Gastrocnemius medialis (tissue), 4 donors: ENCODE measurements at regions of chr2 and their contacts with region 1.

Region 1: GRCh38 chr2:167187978-167188967 is 300.0 kb downstream of the XIRP2 start:
- DNase-seq: no peak
- ATAC-seq: peak; percentile 51 to 57
- H3K4me3 ChIP-seq: peak overlapping the region; percentile 34 to 57 (median 43)
- H3K27ac ChIP-seq: peak overlapping the region; percentile 81 to 88 (median 86)
- H3K4me1 ChIP-seq: peaks cover 31 to 33% of the 10 kb centered on the region in 2 donors
- H3K27me3 ChIP-seq: no peaks in the 10 kb centered on the region
- CTCF ChIP-seq: no peak
- POLR2A ChIP-seq: peak in 1 of 2 donors; percentile 8

Region 2: GRCh38 chr2:166332106-166332505 is 856.2 kb before region 1 on chr2:
- in situ Hi-C with region 1: no loop called
- intact Hi-C with region 1: no loop called
- DNase-seq: no peak
- ATAC-seq: no peak
- H3K4me3 ChIP-seq: no peak overlapping the region
- H3K27ac ChIP-seq: no peak overlapping the region
- H3K4me1 ChIP-seq: no peaks in the 10 kb centered on the region
- H3K27me3 ChIP-seq: no peaks in the 10 kb centered on the region
- CTCF ChIP-seq: no peak
- POLR2A ChIP-seq: no peak

Region 3: DNA sequence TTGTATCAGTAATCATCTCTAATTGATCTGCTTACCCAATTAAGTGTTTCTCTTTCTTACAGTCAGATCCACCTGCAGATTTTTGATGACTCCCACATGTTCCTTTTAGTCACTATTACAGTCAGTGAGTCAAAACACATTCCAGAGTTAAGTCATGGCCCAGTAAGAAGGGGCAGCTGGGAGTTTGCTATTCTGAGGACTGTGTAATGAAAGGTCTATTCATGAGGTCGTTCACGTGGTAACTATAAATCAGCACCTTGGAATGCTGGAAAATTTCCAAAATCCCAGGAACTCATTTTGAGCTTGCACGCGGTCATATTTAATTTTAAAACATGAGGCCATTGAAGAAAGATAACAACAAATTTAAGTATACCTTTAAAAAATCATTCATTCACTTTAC is 47.5 kb before region 1 on chr2:
- in situ Hi-C with region 1: loop called in 1 of 4 experiments (anchors 5 kb)
- intact Hi-C with region 1: loop called (anchors 1 kb)
- DNase-seq: peak; percentile 53 to 65
- ATAC-seq: peak; percentile 96 to 98
- H3K4me3 ChIP-seq: peak overlapping the region in 1 of 4 donors; percentile 7
- H3K27ac ChIP-seq: peak overlapping the region; percentile 75 to 83 (median 78)
- H3K4me1 ChIP-seq: peaks cover 27 to 29% of the 10 kb centered on the region in 2 donors
- H3K27me3 ChIP-seq: no peaks in the 10 kb centered on the region
- CTCF ChIP-seq: no peak
- POLR2A ChIP-seq: no peak